CD4-positive, alpha-beta memory T cell (primary cell): ENCODE measurements at regions of chr2 and their contacts with region 1.

Region 1: GRCh38 chr2:181104512-181105115 is 124.2 kb downstream of the UBE2E3 start:
- DNase-seq: peak in 4 of 5 donors; percentile 48 to 57 (median 52)
- H3K4me3 ChIP-seq: no peak overlapping the region
- H3K4me3 Mint-ChIP-seq: peak overlapping the region in 4 of 8 donors; percentile 0 to 43 (median 6)
- H3K27ac ChIP-seq: no peak overlapping the region
- H3K27ac Mint-ChIP-seq: peak overlapping the region; percentile 1 to 58 (median 8)
- H3K4me1 ChIP-seq: peaks cover 54% of the 10 kb centered on the region
- H3K4me1 Mint-ChIP-seq: peaks cover 29 to 49% (median 35%) of the 10 kb centered on the region in 4 donors
- H3K27me3 ChIP-seq: no peaks in the 10 kb centered on the region
- H3K27me3 Mint-ChIP-seq: no peaks in the 10 kb centered on the region

Region 2: GRCh38 chr2:181123798-181124231 is 19.2 kb after region 1 on chr2:
- CTCF ChIA-PET with region 1: interaction called, 34 read pairs
- POLR2A ChIA-PET with region 1: interaction called, 92 read pairs
- intact Hi-C with region 1: loop called (anchors 2 kb)
- DNase-seq: peak; percentile 78 to 89 (median 87)
- H3K4me3 ChIP-seq: peak overlapping the region in 1 of 2 donors; percentile 36
- H3K4me3 Mint-ChIP-seq: peak overlapping the region; percentile 76 to 90 (median 80)
- H3K27ac ChIP-seq: peak overlapping the region; percentile 78
- H3K27ac Mint-ChIP-seq: peak overlapping the region; percentile 96 to 99 (median 97)
- H3K4me1 ChIP-seq: peaks cover 83% of the 10 kb centered on the region
- H3K4me1 Mint-ChIP-seq: peaks cover 43 to 76% (median 50%) of the 10 kb centered on the region in 4 donors
- H3K27me3 ChIP-seq: no peaks in the 10 kb centered on the region
- H3K27me3 Mint-ChIP-seq: no peaks in the 10 kb centered on the region

Region 3: GRCh38 chr2:181140414-181140813 is 35.8 kb after region 1 on chr2:
- CTCF ChIA-PET with region 1: interaction called, 26 read pairs
- POLR2A ChIA-PET with region 1: interaction called, 63 read pairs
- intact Hi-C with region 1: loop called (anchors 2 kb)
- DNase-seq: peak in 1 of 5 donors; percentile 66
- H3K4me3 ChIP-seq: no peak overlapping the region
- H3K4me3 Mint-ChIP-seq: peak overlapping the region in 7 of 8 donors; percentile 61 to 91 (median 82)
- H3K27ac ChIP-seq: peak overlapping the region; percentile 74
- H3K27ac Mint-ChIP-seq: peak overlapping the region; percentile 86 to 99 (median 98)
- H3K4me1 ChIP-seq: peaks cover 72% of the 10 kb centered on the region
- H3K4me1 Mint-ChIP-seq: peaks cover 44 to 78% (median 58%) of the 10 kb centered on the region in 4 donors
- H3K27me3 ChIP-seq: no peaks in the 10 kb centered on the region
- H3K27me3 Mint-ChIP-seq: no peaks in the 10 kb centered on the region

Region 4: GRCh38 chr2:181223234-181223633 is 118.6 kb after region 1 on chr2:
- CTCF ChIA-PET with region 1: interaction called, 7 read pairs
- POLR2A ChIA-PET with region 1: interaction called, 9 read pairs
- intact Hi-C with region 1: loop called (anchors 5 kb)
- DNase-seq: peak in 4 of 5 donors; percentile 35 to 63 (median 48)
- H3K4me3 ChIP-seq: no peak overlapping the region
- H3K4me3 Mint-ChIP-seq: peak overlapping the region in 7 of 8 donors; percentile 53 to 86 (median 65)
- H3K27ac ChIP-seq: peak overlapping the region; percentile 61
- H3K27ac Mint-ChIP-seq: peak overlapping the region; percentile 88 to 99 (median 94)
- H3K4me1 ChIP-seq: peaks cover 37% of the 10 kb centered on the region
- H3K4me1 Mint-ChIP-seq: peaks cover 22 to 40% (median 29%) of the 10 kb centered on the region in 4 donors
- H3K27me3 ChIP-seq: no peaks in the 10 kb centered on the region
- H3K27me3 Mint-ChIP-seq: no peaks in the 10 kb centered on the region

Region 5: GRCh38 chr2:181305301-181306123 is 200.9 kb after region 1 on chr2:
- CTCF ChIA-PET with region 1: interaction called, 9 read pairs
- POLR2A ChIA-PET with region 1: interaction called, 13 read pairs
- intact Hi-C with region 1: loop called (anchors 1 kb)
- DNase-seq: peak in 4 of 5 donors; percentile 38 to 71 (median 44)
- H3K4me3 ChIP-seq: peak overlapping the region in 1 of 2 donors; percentile 16
- H3K4me3 Mint-ChIP-seq: peak overlapping the region; percentile 64 to 81 (median 72)
- H3K27ac ChIP-seq: peak overlapping the region; percentile 73
- H3K27ac Mint-ChIP-seq: peak overlapping the region; percentile 88 to 97 (median 92)
- H3K4me1 ChIP-seq: peaks cover 91% of the 10 kb centered on the region
- H3K4me1 Mint-ChIP-seq: peaks cover 53 to 80% (median 65%) of the 10 kb centered on the region in 4 donors
- H3K27me3 ChIP-seq: no peaks in the 10 kb centered on the region
- H3K27me3 Mint-ChIP-seq: no peaks in the 10 kb centered on the region

Region 6: GRCh38 chr2:181430406-181431118 is 325.9 kb after region 1 on chr2:
- CTCF ChIA-PET with region 1: interaction called, 3 read pairs
- POLR2A ChIA-PET with region 1: no interaction called
- intact Hi-C with region 1: loop called (anchors 2 kb)
- DNase-seq: peak; percentile 34 to 53 (median 42)
- H3K4me3 ChIP-seq: no peak overlapping the region
- H3K4me3 Mint-ChIP-seq: peak overlapping the region in 1 of 8 donors; percentile 23
- H3K27ac ChIP-seq: no peak overlapping the region
- H3K27ac Mint-ChIP-seq: peak overlapping the region; percentile 38 to 85 (median 74)
- H3K4me1 ChIP-seq: peaks cover 13% of the 10 kb centered on the region
- H3K4me1 Mint-ChIP-seq: peaks cover 7 to 16% (median 12%) of the 10 kb centered on the region in 4 donors
- H3K27me3 ChIP-seq: no peaks in the 10 kb centered on the region
- H3K27me3 Mint-ChIP-seq: no peaks in the 10 kb centered on the region

Region 7: DNA sequence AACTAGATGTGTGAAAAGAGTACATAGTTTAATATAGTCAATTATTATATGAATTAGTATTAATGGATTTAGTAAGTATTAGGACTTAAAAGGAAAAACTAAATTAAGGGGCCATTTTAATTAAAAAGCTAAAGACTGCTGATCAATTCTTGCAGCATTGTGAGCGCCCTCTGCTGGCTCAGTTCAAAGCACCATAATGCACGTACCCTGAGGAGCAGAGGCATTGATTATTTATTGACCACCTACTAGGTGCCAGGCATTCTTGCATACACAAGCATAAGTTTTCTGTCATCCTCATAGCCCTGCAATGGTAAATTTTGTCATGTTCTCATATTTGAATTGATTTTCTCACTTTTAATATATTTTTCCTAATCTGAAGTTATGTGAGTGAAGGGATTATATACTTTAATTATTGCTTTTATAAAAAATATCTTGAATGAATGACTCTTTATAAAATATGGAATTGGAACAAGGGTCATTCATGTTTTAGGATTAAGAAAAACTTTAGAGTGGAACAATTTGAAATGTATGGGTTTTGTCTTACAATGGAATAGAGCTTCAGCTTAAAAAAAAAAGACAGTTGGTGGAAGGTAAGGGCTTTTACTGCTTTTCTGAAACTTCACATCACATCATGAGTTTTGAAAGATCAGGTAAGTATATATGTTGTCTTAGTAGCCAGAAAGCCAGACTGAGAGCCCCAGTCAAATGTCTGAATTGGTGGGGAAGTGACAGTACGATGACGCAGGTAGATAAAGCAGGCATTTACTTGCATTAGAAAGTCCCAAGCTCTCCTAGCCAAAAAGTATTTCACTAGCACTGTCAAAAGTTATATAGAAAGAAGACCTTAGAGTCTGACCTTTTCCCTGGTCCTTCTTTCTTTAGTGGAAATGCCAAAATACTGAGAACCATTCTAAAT is 362.3 kb after region 1 on chr2:
- CTCF ChIA-PET with region 1: interaction called, 37 read pairs
- POLR2A ChIA-PET with region 1: interaction called, 13 read pairs
- intact Hi-C with region 1: loop called (anchors 1 kb)
- DNase-seq: peak; percentile 65 to 75 (median 68)
- H3K4me3 ChIP-seq: no peak overlapping the region
- H3K4me3 Mint-ChIP-seq: peak overlapping the region; percentile 55 to 77 (median 64)
- H3K27ac ChIP-seq: peak overlapping the region; percentile 56
- H3K27ac Mint-ChIP-seq: peak overlapping the region; percentile 87 to 96 (median 93)
- H3K4me1 ChIP-seq: peaks cover 86% of the 10 kb centered on the region
- H3K4me1 Mint-ChIP-seq: peaks cover 66 to 91% (median 71%) of the 10 kb centered on the region in 4 donors
- H3K27me3 ChIP-seq: no peaks in the 10 kb centered on the region
- H3K27me3 Mint-ChIP-seq: no peaks in the 10 kb centered on the region